Activated CD8-positive, alpha-beta T cell treated with anti-CD3 and anti-CD28 coated beads, Interleukin-2, amount 10 ng/mL, durations not matched to agents 7 days and 5 days (primary cell): ENCODE measurements at regions of chr5 and their contacts with region 1.

Region 1: DNA sequence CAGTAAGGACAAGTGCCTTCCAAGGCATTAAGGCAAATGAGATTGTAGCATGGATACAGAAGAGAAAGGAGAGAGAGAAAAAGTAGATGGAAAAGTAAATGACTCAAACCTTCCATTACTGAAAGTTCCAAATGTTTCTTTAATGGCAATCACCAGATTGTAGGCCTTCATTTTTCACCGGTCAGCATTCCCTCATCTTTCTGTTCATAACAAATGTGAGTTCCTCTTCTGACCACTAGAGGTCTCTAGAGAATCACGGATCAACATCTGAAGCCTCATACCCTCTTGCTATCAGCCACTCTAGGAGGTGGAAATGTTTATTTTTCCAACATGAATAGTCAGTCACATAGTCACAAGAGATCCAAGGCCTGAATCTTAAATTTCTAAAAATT is 73.6 kb upstream of the RPS23 start:
- DNase-seq: no peak
- ATAC-seq: no peak
- H3K4me3 Mint-ChIP-seq: no peak overlapping the region
- H3K27ac Mint-ChIP-seq: no peak overlapping the region
- H3K4me1 Mint-ChIP-seq: peaks cover 61% of the 10 kb centered on the region
- H3K27me3 Mint-ChIP-seq: peaks cover 2% of the 10 kb centered on the region

Region 2: DNA sequence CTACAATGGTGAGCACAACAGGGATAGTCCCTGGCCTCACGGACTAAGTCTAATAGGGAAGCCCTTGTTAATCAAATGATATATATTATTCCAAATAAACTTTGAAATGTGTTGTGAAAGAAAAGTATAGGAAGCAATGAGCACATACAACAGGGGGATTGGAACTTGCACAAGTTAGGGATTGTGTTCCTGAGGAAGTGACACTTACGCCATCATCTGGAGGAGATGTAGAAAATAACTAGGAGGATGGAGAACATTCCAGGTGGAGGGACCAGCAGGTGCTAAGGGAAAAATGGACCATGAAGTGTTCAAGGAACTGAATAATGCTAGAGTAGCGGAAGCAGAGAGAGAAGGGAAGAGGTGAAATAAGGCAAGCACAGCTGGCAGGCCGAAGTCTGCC is 54.8 kb before region 1 on chr5:
- CTCF ChIA-PET with region 1: no interaction called
- POLR2A ChIA-PET with region 1: no interaction called
- DNase-seq: no peak
- ATAC-seq: no peak
- H3K4me3 Mint-ChIP-seq: no peak overlapping the region
- H3K27ac Mint-ChIP-seq: no peak overlapping the region
- H3K4me1 Mint-ChIP-seq: no peaks in the 10 kb centered on the region
- H3K27me3 Mint-ChIP-seq: no peaks in the 10 kb centered on the region

Region 3: GRCh38 chr5:82312373-82312856 is 39.3 kb before region 1 on chr5:
- CTCF ChIA-PET with region 1: interaction called, 26 read pairs
- POLR2A ChIA-PET with region 1: no interaction called
- DNase-seq: peak; percentile 54
- ATAC-seq: peak; percentile 60
- H3K4me3 Mint-ChIP-seq: no peak overlapping the region
- H3K27ac Mint-ChIP-seq: no peak overlapping the region
- H3K4me1 Mint-ChIP-seq: peaks cover 3% of the 10 kb centered on the region
- H3K27me3 Mint-ChIP-seq: peaks cover 4% of the 10 kb centered on the region

Region 4: DNA sequence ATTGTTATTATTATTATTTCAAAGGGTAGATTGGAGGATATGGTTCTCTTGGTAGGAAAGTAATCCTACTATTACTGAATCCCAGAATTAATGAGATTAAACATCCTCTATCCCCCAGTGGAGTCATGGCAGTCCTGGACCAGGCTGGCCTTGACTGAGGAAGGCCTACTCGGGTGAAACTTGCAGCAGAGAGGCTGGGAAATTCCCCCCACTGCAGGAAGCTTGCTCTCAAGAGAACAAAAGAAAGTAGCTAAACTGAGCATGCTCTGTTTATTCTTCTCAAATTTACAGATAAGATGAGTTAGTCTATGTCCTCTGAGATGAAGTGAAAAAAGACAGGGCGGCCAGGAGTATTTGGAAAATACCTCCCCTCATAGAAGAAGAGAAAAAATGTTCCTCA is 160.3 kb after region 1 on chr5:
- CTCF ChIA-PET with region 1: no interaction called
- POLR2A ChIA-PET with region 1: no interaction called
- DNase-seq: no peak
- ATAC-seq: no peak
- H3K4me3 Mint-ChIP-seq: no peak overlapping the region
- H3K27ac Mint-ChIP-seq: no peak overlapping the region
- H3K4me1 Mint-ChIP-seq: no peaks in the 10 kb centered on the region
- H3K27me3 Mint-ChIP-seq: peaks cover 2% of the 10 kb centered on the region

Region 5: GRCh38 chr5:83430130-83431010 is 1078.6 kb after region 1 on chr5:
- CTCF ChIA-PET with region 1: interaction called, 20 read pairs
- POLR2A ChIA-PET with region 1: no interaction called
- DNase-seq: peak; percentile 72
- ATAC-seq: peak; percentile 88
- H3K4me3 Mint-ChIP-seq: no peak overlapping the region
- H3K27ac Mint-ChIP-seq: no peak overlapping the region
- H3K4me1 Mint-ChIP-seq: no peaks in the 10 kb centered on the region
- H3K27me3 Mint-ChIP-seq: no peaks in the 10 kb centered on the region